A673 (cell line): ENCODE measurements at regions of chr11 and their contacts with region 1.

Region 1: DNA sequence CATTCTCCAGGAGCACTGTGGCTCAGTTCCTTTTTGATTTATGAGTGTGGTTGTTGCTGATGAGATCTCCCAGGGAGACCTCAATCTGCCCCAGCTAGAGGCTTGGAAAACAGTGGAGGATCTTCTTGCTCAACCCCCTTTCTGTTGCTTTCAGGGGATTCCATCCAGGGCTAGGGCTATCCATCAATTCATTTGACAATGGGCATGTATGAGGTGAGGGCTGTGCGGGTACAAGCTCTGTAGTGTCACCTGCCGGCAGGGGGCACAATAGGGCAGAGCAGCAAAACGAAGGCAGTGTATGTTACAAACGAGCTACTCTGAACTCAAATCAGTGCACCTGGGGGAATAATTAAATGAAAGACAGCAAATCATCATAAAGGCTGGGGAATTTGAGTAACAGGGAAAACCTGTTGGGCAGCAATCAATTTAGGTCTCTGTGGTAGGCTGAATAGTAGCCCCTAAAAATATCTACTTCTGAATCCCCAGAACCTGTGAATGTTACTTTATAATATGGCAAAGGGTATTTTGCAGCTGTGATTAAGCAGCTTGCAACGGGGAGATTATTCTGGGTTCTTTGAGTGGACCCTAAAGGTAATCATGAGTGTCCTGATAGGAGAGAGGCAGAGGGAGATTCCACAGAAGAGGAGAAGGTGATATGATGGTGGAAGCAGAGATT is 170.3 kb upstream of the ZBED5 start:
- DNase-seq: peak; percentile 66
- H3K4me3 ChIP-seq: no peak overlapping the region
- H3K27ac ChIP-seq: no peak overlapping the region
- H3K4me1 ChIP-seq: no peaks in the 10 kb centered on the region
- H3K27me3 ChIP-seq: no peaks in the 10 kb centered on the region
- CTCF ChIP-seq: peak; percentile 85

Region 2: DNA sequence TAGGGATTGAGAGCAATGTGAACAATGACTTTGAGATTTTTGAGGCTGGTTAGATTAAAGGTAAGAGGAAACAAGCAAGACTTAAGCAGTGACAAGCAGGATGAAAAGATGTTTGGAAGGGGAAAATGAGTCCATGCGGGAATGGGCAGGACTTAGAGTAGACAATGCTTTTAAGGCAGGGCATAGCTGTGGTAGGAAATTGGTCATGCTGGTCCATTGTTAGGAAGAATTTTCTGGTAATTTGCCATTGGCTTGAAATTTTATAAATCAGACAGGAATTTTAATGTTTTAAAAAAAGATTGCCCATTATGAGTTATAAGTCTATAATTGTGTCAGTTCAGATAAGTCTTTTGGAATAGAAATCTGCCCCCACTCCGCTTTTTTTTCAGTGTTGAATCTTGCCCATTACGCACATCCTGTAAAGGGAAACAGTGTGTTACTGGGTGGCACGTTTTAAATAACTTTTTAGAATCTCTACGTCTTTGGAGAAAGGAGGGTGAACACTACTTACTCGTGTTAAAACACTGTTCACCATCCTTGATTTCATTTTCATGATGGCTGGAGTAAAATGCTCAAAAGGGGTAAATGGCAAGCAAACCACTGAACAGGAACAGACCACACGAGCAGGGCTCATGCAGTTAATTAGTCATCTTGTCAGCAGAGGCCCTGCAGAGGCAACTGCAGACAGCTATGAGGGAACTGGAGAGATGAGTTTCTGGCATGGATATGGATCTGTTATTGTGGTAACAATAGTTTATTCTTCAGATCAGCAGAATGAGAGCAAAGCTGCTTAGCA is 1339.2 kb before region 1 on chr11:
- CTCF ChIA-PET with region 1: no interaction called
- POLR2A ChIA-PET with region 1: no interaction called
- intact Hi-C with region 1: no loop called
- DNase-seq: peak; percentile 73
- H3K4me3 ChIP-seq: peak overlapping the region; percentile 21
- H3K27ac ChIP-seq: peak overlapping the region; percentile 72
- H3K4me1 ChIP-seq: peaks cover 37% of the 10 kb centered on the region
- H3K27me3 ChIP-seq: no peaks in the 10 kb centered on the region
- CTCF ChIP-seq: no peak

Region 3: GRCh38 chr11:10943968-10944367 is 84.2 kb before region 1 on chr11:
- CTCF ChIA-PET with region 1: no interaction called
- POLR2A ChIA-PET with region 1: no interaction called
- intact Hi-C with region 1: no loop called
- DNase-seq: no peak
- H3K4me3 ChIP-seq: no peak overlapping the region
- H3K27ac ChIP-seq: no peak overlapping the region
- H3K4me1 ChIP-seq: no peaks in the 10 kb centered on the region
- H3K27me3 ChIP-seq: no peaks in the 10 kb centered on the region
- CTCF ChIP-seq: no peak

Region 4: GRCh38 chr11:11261629-11262028 is 233.5 kb after region 1 on chr11:
- CTCF ChIA-PET with region 1: no interaction called
- POLR2A ChIA-PET with region 1: no interaction called
- intact Hi-C with region 1: no loop called
- DNase-seq: no peak
- H3K4me3 ChIP-seq: no peak overlapping the region
- H3K27ac ChIP-seq: no peak overlapping the region
- H3K4me1 ChIP-seq: peaks cover 15% of the 10 kb centered on the region
- H3K27me3 ChIP-seq: no peaks in the 10 kb centered on the region
- CTCF ChIP-seq: no peak

Region 5: DNA sequence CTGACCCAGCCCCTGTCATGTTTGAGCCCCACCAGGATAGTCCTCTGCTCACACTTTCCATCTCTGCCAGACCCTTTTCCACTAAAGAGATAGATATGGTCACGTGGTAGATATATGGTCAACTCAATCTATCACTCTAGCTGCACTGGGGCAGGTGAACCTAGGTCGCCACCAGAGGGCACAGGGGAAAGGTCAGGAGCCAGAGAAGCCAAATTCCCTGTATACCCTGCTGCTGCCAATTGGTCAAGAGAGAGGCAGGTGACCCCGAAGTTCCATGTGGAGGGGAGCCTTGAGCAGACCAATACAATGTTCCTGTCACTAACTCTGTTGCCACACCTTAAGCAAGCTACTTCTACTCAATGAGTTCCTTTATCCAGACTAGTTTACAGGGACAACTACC is 694.7 kb after region 1 on chr11:
- CTCF ChIA-PET with region 1: interaction called, 13 read pairs
- POLR2A ChIA-PET with region 1: no interaction called
- intact Hi-C with region 1: no loop called
- DNase-seq: no peak
- H3K4me3 ChIP-seq: no peak overlapping the region
- H3K27ac ChIP-seq: no peak overlapping the region
- H3K4me1 ChIP-seq: no peaks in the 10 kb centered on the region
- H3K27me3 ChIP-seq: peaks cover 4% of the 10 kb centered on the region
- CTCF ChIP-seq: no peak